ENCODE measurements at regions of chr10 and their contacts with region 1.

Region 1: DNA sequence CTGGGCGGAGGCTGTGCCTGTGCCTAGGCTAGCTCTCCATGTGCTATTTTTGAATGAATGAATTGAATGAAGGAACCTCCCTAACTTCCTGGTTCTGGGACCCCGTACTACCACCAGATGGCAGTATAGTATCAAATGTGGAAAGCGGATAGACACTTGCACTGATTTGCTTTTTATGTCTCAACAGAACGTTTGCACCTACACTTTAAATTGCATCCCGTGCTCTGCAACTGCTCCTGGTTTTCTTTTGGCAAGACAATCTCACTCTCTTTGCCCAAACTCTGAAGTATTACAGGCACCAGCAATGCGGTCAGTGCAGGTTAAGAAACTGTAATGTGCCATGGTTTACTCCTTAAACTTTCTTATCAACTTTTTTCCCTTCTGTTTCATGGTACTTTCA is 6.5 kb downstream of the FZD8 start:
- DNase-seq: peak in 1 of 2 donors; percentile 87
- H3K4me3 ChIP-seq: no peak overlapping the region
- H3K27ac ChIP-seq: no peak overlapping the region
- H3K4me1 ChIP-seq: peaks cover 11 to 46% (median 28%) of the 10 kb centered on the region in 4 donors
- H3K27me3 ChIP-seq: peaks cover 0 to 24% (median 4%) of the 10 kb centered on the region in 3 donors
- CTCF ChIP-seq: peak in 5 of 7 experiments; percentile 82 to 89 (median 88)
- EP300 ChIP-seq: no peak
- POLR2A ChIP-seq: no peak

Region 2: DNA sequence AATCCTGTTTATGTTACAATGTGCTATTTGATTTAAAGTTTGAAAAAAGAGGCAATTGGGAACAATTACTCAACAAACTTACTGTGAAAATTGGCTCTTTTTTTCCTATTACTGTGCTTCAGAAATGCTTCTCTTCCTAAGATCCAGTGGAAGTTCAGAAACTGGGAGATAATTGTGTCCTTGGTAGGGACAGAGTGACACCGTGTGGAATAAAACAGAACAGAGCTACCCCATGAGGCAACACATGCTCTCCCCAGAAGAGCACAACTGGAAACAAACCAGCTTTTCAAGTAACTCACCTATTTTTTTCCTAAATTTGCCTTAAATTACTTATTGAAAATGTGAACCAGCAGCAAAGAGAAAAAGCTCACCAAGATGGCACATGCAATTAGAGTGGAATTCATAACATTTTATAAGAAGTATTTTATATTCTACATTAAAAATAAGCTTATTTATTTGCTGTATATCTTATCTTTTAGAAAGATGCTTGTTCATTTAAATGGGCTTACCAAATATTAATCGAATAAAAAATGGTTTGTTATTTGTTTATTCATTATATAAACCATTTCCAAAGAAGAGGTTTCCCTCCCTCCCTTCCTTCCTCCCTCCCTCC is 1143.8 kb after region 1 on chr10:
- intact Hi-C with region 1: loop called (anchors 5 kb)
- DNase-seq: peak in 1 of 2 donors; percentile 86
- H3K4me3 ChIP-seq: no peak overlapping the region
- H3K27ac ChIP-seq: no peak overlapping the region
- H3K4me1 ChIP-seq: peaks cover 0 to 5% (median 0%) of the 10 kb centered on the region in 4 donors
- H3K27me3 ChIP-seq: peaks cover 0 to 6% (median 0%) of the 10 kb centered on the region in 3 donors
- CTCF ChIP-seq: peak in 5 of 7 experiments; percentile 51 to 59 (median 54)
- EP300 ChIP-seq: no peak
- POLR2A ChIP-seq: no peak

Region 3: DNA sequence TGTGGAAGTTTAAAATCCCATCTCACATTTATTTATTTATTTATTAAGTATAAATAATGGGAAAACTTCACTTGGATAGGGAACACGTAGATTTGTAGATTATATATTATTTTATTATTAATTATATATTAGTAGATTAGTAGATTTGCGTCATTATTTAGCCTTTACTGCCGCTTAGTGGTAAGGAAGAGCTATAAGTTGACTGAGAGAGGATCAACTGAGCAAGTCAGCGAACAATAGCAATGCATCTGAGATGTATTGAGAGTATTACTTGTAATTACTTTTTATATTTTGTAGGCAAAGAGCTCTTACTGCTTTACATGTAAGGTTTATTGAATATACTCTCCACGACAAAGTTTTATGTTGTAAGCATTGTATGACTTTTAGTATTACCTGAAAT is 1245.3 kb after region 1 on chr10:
- intact Hi-C with region 1: loop called (anchors 5 kb)
- DNase-seq: peak in 1 of 2 donors; percentile 53
- H3K4me3 ChIP-seq: no peak overlapping the region
- H3K27ac ChIP-seq: no peak overlapping the region
- H3K4me1 ChIP-seq: no peaks in the 10 kb centered on the region
- H3K27me3 ChIP-seq: no peaks in the 10 kb centered on the region
- CTCF ChIP-seq: peak in 3 of 7 experiments; percentile 31 to 36 (median 32)
- EP300 ChIP-seq: no peak
- POLR2A ChIP-seq: no peak